PC-9 (cell line): ENCODE measurements at regions of chr17 and their contacts with region 1.

Region 1: DNA sequence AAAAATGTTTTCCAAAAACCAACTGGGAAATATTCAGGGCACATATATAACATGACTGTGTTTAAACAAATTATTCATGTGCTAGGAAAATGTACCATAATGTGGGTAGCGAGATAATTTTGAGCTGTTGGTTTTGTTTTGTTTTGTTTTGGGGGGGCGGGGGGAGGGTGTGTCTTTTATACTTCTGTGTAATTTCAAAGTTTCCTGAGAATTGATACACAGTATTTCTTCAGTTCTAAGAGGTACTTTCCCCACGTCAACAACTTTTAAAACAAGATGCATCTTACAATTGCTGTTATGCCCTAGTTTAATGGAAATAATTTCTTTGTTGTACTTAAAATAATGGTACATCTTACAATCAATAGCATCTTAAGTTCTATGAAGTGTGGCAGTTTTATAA is 99.7 kb upstream of the RPRML start:
- DNase-seq: no peak
- H3K4me3 ChIP-seq: no peak overlapping the region
- H3K27ac ChIP-seq: no peak overlapping the region
- H3K4me1 ChIP-seq: peaks cover 13% of the 10 kb centered on the region
- H3K27me3 ChIP-seq: no peaks in the 10 kb centered on the region
- CTCF ChIP-seq: no peak

Region 2: DNA sequence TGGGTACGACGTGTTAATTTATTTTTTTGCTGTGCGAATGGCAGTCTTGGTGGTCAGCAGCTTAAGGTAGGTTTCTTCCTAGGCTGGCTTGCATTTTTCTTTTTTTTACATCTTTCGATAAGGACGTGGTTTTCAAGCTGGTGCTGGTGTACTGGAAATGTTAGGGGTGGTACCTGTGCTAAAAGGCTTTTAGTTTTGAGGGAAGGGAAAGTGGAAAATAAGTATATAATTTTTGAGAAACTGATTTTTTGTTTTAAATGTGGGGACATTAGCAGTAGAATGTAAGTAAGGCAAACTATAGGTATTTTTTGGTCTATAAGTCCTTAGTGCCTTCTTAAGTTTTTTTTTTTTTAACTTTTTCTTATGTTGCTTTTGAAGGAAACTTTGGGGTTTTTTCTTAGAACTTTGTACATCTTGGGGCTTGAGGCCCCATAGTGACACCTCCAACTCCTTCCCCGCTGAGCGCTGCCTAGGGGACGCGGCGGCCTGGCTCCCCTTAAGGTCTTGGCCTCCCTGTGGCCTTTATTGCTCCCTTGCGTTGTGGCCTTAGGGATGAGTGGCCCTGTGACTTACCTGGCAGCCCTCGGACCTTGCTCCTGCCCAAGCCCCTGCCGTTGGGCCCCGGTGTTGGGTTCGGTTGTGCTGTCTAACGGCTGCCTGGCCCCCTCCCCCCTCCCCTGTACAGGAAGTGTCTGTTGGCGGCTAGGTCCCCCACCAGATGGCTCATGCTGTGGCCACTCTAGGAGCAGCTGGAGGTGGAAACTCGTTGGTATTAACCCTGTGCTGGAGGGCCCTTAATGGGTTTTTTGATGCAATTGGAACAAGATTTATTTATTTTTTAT is 11.7 kb before region 1 on chr17:
- CTCF ChIA-PET with region 1: interaction called, 11 read pairs
- POLR2A ChIA-PET with region 1: no interaction called
- intact Hi-C with region 1: no loop called
- DNase-seq: peak; percentile 69 to 78
- H3K4me3 ChIP-seq: peak overlapping the region; percentile 86
- H3K27ac ChIP-seq: peak overlapping the region; percentile 70
- H3K4me1 ChIP-seq: peaks cover 20% of the 10 kb centered on the region
- H3K27me3 ChIP-seq: no peaks in the 10 kb centered on the region
- CTCF ChIP-seq: no peak; the same call in 1 of the 2 replicates

Region 3: DNA sequence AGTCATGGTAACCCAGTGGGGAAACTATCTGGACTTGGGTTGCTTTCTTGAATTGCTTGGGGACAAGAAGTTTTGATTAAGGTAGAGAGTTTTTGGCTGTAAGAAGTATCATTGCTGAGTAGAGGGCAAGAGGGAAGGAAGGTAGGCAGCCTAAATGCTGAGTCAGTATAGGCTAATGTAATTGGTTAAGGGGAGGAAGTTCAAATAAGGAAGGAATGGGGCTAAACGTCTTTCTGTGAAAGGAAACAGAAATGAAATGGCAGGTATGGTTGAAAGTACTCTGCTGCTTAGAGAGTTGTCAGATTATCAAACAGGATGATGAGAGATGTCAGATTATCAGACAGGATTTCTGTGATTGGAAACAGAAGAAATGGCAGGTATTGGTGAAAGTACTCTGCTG is 591.3 kb after region 1 on chr17:
- CTCF ChIA-PET with region 1: no interaction called
- POLR2A ChIA-PET with region 1: no interaction called
- intact Hi-C with region 1: no loop called
- DNase-seq: no peak
- H3K4me3 ChIP-seq: no peak overlapping the region
- H3K27ac ChIP-seq: peak overlapping the region; percentile 17; the same call in 1 of the 2 replicates
- H3K4me1 ChIP-seq: no peaks in the 10 kb centered on the region
- H3K27me3 ChIP-seq: no peaks in the 10 kb centered on the region
- CTCF ChIP-seq: no peak